Spleen (tissue), 13 donors: ENCODE measurements at regions of chr3 and their contacts with region 1.

Region 1: DNA sequence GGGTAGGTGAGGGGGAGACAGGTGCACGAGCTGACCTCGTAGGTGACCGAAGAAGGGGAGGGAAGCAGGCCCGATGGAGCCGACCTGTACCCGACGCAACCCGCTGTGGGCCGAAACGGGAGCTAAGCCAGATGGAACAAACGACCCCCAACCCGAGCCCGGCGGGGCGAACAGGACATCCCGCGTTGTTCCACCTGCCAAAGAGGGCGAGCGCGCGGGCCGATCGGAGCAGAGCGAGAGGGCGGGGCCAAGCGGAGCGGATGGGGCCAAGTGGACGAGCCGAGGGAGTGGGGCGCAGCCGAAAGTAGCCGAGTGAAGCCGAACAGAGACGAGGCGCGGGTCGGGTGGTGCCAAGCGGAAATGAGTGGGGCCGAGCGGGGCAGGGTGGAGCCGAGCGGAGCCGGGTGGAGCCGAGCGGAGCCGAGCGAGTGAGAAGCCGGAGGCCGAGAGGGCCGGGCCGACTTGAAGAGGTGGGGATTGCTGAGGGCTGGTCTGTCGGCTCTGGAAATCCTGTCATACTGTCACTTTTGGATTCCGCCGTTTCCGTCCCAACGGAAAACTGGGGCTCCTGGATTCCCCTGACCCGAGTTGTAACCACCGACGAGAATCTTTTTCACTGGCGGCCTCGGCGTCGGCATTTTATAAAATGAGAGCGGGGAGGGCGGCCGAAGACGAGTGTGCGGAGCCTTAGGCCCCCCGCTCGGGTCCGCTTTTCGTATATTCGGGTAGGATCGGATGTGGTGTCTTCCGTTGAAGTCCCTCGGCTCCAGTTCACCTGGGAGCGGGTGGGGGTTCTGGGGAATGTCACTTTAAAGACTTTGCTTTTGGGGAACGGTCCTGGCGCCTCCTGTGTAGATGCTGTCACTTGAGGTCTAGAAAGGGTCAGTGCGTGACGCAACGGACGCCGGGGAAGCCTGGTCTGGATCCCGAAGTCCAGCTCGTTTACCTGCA is 15.6 kb upstream of the WNT7A start:
- DNase-seq: peak; percentile 97
- H3K4me3 ChIP-seq: peak overlapping the region; percentile 39 to 74 (median 50)
- H3K27ac ChIP-seq: peak overlapping the region; percentile 43 to 86 (median 82)
- H3K4me1 ChIP-seq: peaks cover 7 to 36% (median 26%) of the 10 kb centered on the region in 6 donors
- H3K27me3 ChIP-seq: peaks cover 0 to 20% (median 0%) of the 10 kb centered on the region in 7 donors
- CTCF ChIP-seq: no peak
- POLR2A ChIP-seq: no peak

Region 2: DNA sequence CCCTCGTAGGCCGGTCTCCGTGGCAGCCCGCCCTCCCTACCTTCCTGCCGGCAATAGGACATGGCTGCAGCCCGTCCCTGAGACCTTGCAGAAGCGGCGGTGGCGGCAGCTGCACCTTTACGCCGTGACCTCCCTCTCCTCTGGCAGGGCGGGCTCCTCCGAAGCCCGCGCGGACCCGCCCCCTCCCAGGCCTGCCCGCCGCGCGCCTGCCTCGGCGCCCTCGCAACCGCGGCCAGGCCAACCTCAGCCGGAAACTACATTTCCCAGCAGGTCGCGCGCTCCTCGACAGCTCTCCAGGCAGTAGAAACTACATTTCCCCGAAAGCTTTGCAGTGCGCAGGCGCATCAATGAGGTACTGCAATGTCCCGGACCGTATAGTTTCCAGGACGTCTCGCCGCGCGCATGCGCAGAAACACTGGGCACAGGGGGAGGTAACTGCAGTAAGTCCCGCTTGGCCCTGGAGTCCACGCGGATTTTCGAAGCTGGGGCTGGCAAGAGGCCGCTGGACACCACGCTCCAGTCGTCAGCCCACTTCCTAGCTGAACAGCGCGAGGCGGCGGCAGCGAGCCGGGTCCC is 229.3 kb after region 1 on chr3 and contains the starts of genes CHCHD4 and TMEM43:
- intact Hi-C with region 1: loop called (anchors 10 kb)
- DNase-seq: peak; percentile 100
- H3K4me3 ChIP-seq: peak within 1 kb of the TSS; percentile 84 to 98 (median 94)
- H3K27ac ChIP-seq: peak within 1 kb of the TSS; percentile 66 to 96 (median 92)
- H3K4me1 ChIP-seq: peaks cover 22 to 51% (median 47%) of the 10 kb centered on the region in 6 donors
- H3K27me3 ChIP-seq: no peaks in the 10 kb centered on the region
- CTCF ChIP-seq: peak in 3 of 11 experiments; percentile 12 to 26 (median 23)
- POLR2A ChIP-seq: peak in 2 of 3 donors; percentile 8 to 24
- total RNA-seq, gene CHCHD4: 8.5 to 17.1 (median 9.5) TPM
- total RNA-seq, gene TMEM43: 40.5 to 64.2 (median 53.9) TPM

Region 3: GRCh38 chr3:14461748-14462324 is 566.4 kb after region 1 on chr3:
- intact Hi-C with region 1: loop called (anchors 10 kb)
- DNase-seq: peak; percentile 86
- H3K4me3 ChIP-seq: no peak overlapping the region
- H3K27ac ChIP-seq: peak overlapping the region in 4 of 8 donors; percentile 18 to 47 (median 30)
- H3K4me1 ChIP-seq: peaks cover 0 to 43% (median 22%) of the 10 kb centered on the region in 6 donors
- H3K27me3 ChIP-seq: no peaks in the 10 kb centered on the region
- CTCF ChIP-seq: peak; percentile 12 to 84 (median 67)
- POLR2A ChIP-seq: no peak